Activated CD4-positive, alpha-beta memory T cell treated with anti-CD3 and anti-CD28 coated beads for 36 hours (primary cell): ENCODE measurements at regions of chr15 and their contacts with region 1.

Region 1: DNA sequence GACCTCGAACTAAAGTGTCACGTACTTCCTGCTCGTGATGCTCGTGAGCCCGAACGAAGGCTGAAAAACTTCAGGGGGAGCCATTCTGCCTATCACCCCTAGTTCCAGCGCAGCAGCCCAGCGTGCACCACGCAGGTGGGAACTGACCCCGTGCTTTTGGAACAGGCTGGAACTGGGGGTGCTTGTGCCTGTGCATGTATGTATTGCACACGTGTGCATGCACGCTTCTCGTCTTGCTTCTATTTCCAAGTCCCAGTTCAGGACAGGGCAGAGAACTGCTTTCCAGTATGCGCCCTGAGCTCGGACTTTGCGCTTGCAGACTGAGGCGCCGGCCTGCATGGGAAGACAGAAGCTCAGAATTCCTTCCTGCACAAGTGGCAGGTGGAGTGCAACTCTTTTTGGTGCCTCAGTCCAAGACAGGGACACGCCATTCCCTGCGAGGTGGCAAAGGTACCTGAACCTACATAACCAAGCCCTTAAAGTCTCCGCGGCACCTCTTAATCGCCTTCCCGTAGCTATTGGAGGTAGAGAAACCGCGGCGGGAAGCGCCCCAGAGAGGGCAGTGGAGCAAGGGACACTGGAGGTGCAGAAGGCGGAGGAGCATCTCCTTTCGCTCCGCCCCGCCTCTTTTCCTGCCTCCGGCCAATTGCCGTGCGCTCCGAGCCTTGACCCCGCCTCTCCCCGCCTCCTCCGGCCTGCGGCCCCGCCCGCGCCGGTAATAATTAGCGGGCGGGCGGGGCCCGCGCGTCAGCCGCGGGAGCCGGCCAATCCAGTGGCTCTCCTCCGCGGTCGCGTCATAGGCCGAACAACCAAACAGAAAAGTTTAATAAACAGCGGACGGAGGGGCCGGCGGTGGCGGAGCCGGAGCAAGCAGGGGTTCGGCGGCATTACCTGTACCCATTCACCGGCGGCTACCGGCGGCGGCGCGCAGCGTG is at the start of gene ZFAND6:
- DNase-seq: peak; percentile 97
- H3K4me3 Mint-ChIP-seq: peak within 1 kb of the TSS; percentile 81
- H3K27ac Mint-ChIP-seq: peak within 1 kb of the TSS; percentile 90
- H3K4me1 Mint-ChIP-seq: peaks cover 35% of the 10 kb centered on the region
- H3K27me3 Mint-ChIP-seq: no peaks in the 10 kb centered on the region
- total RNA-seq, gene ZFAND6: 32.2 to 33.4 TPM

Region 2: DNA sequence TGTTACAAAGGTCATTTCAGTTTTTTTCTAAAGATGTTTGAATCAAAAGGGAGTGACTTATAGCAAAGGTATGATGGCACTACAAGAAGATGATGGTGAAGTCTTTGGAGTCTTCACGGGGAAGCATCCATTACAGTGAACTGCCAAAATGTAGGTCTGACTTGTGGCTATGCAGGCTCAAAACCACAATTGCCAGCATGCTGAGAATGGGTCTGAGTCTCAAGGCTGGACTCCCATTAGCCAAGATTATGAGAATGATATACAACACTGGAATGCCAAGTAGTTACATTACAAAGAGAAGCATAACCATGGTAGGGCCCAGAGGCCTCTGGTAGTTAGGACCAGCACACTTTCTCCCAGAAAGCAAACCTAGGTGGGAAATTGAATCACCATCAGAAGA is 356.5 kb before region 1 on chr15:
- CTCF ChIA-PET with region 1: no interaction called
- POLR2A ChIA-PET with region 1: no interaction called
- intact Hi-C with region 1: no loop called
- DNase-seq: no peak
- H3K4me3 Mint-ChIP-seq: no peak overlapping the region
- H3K27ac Mint-ChIP-seq: no peak overlapping the region
- H3K4me1 Mint-ChIP-seq: no peaks in the 10 kb centered on the region
- H3K27me3 Mint-ChIP-seq: peaks cover 8% of the 10 kb centered on the region

Region 3: GRCh38 chr15:79896637-79897379 is 162.3 kb before region 1 on chr15 and contains the start of gene MTHFS:
- CTCF ChIA-PET with region 1: interaction called, 6 read pairs
- POLR2A ChIA-PET with region 1: no interaction called
- intact Hi-C with region 1: loop called (anchors 2 kb)
- DNase-seq: peak; percentile 83
- H3K4me3 Mint-ChIP-seq: peak within 1 kb of the TSS; percentile 97
- H3K27ac Mint-ChIP-seq: peak within 1 kb of the TSS; percentile 99
- H3K4me1 Mint-ChIP-seq: peaks cover 45% of the 10 kb centered on the region
- H3K27me3 Mint-ChIP-seq: no peaks in the 10 kb centered on the region
- total RNA-seq, gene MTHFS: 46.2 to 49.4 TPM

Region 4: GRCh38 chr15:80011596-80011995 is 47.5 kb before region 1 on chr15:
- CTCF ChIA-PET with region 1: no interaction called
- POLR2A ChIA-PET with region 1: no interaction called
- intact Hi-C with region 1: loop called (anchors 1 kb)
- DNase-seq: no peak
- H3K4me3 Mint-ChIP-seq: no peak overlapping the region
- H3K27ac Mint-ChIP-seq: no peak overlapping the region
- H3K4me1 Mint-ChIP-seq: peaks cover 14% of the 10 kb centered on the region
- H3K27me3 Mint-ChIP-seq: no peaks in the 10 kb centered on the region

Region 5: GRCh38 chr15:80072285-80072994 is 13.3 kb after region 1 on chr15:
- CTCF ChIA-PET with region 1: interaction called, 5 read pairs
- POLR2A ChIA-PET with region 1: interaction called, 6 read pairs
- intact Hi-C with region 1: loop called (anchors 1 kb)
- DNase-seq: no peak
- H3K4me3 Mint-ChIP-seq: peak overlapping the region; percentile 80
- H3K27ac Mint-ChIP-seq: peak overlapping the region; percentile 65
- H3K4me1 Mint-ChIP-seq: peaks cover 63% of the 10 kb centered on the region
- H3K27me3 Mint-ChIP-seq: no peaks in the 10 kb centered on the region

Region 6: DNA sequence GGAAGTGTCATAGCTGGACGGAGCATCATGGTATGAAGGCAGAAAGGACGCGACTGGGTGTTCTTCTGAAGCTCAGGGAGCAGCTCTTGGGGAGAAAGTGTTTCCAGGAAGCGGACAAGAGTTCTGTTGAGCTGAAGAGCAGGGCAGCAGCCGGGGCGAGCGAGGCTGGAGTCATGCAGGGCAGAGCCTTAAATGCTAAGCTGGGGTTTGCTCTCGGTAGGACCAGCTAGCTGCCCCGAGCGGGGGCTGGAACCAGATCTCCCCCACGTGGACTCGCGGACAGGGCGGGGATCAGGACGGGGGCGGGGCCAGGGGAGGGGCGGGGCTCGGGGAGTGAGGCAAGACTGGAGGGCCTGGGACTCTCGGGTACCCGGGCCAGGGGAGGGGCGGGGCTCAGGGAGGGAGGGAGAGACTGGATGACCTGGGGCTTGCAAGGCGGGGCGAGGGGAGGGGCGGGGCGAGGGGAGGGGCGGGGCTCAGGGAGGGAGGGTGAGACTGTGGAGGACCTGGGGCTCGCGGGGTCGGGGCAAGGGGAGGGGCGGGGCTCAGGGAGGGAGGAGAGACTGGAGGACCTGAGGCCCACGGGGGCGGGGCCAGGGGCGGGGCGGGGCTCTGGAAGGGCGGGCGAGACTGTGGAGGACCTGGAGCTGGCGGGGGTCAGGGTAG is 93.2 kb after region 1 on chr15:
- CTCF ChIA-PET with region 1: interaction called, 4 read pairs
- POLR2A ChIA-PET with region 1: interaction called, 4 read pairs
- intact Hi-C with region 1: loop called (anchors 1 kb)
- DNase-seq: peak; percentile 98
- H3K4me3 Mint-ChIP-seq: peak overlapping the region; percentile 74
- H3K27ac Mint-ChIP-seq: peak overlapping the region; percentile 50
- H3K4me1 Mint-ChIP-seq: peaks cover 23% of the 10 kb centered on the region
- H3K27me3 Mint-ChIP-seq: no peaks in the 10 kb centered on the region